ENCODE measurements at regions of chr11 and their contacts with region 1.

Region 1: GRCh38 chr11:114059278-114059983 is at the start of gene ZBTB16:
- DNase-seq: peak; percentile 69
- ATAC-seq: peak; percentile 55
- H3K4me3 Mint-ChIP-seq: peak within 1 kb of the TSS; percentile 92
- H3K27ac Mint-ChIP-seq: peak within 1 kb of the TSS; percentile 82
- H3K4me1 Mint-ChIP-seq: peaks cover 12% of the 10 kb centered on the region
- H3K27me3 Mint-ChIP-seq: peaks cover 61% of the 10 kb centered on the region
- total RNA-seq, gene ZBTB16: 13.1 to 14.6 TPM

Region 2: DNA sequence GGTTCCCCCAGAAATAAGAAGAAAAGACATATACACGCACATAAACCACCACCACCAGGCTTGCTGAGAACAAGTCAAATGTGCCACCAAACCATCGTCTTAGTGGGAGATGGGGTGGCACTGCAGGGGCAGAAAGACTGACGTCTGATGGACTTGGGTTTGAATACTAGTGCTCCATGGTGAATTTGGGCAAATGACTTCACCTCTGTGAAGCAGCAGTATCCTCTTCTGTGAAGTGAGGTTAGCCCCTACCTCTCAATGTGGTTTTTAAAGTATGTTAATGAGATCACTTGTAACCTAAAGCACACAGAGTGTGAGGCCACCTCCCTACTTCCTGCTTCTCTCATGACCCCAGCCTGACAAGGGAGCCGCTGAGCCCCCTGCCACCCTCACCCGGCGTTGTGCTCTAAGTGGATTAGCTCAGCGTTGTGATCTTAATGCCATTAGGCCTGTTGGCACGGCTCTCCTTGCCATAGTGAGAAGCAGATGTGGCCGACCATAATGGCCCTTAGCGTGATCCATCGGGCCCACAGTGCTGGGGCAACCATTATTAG is 14.5 kb after region 1 on chr11:
- POLR2A ChIA-PET with region 1: interaction called, 33 read pairs
- DNase-seq: peak; percentile 59
- ATAC-seq: peak; percentile 81
- H3K4me3 Mint-ChIP-seq: peak overlapping the region; percentile 56
- H3K27ac Mint-ChIP-seq: peak overlapping the region; percentile 91
- H3K4me1 Mint-ChIP-seq: peaks cover 61% of the 10 kb centered on the region
- H3K27me3 Mint-ChIP-seq: peaks cover 3% of the 10 kb centered on the region

Region 3: DNA sequence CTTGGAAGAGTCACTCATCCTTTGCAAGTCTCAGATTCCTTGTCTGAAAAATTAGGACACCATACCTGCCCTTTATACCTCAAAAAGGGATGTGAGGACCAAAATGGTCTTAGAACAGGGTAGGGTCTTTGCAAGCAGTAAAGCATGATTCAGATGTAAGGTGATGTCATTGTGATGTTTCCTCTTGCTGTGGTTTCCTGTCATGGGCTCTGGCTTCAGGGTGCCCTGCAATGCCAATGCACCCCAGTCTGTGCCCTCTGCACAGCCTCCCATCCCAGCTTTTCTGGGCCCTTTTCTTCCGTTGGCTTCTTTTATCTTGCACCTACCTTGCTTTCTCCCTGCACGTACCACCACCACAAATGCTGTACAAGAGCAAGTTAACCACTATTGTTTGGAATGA is 148.9 kb after region 1 on chr11:
- POLR2A ChIA-PET with region 1: no interaction called
- DNase-seq: no peak
- ATAC-seq: peak; percentile 99
- H3K4me3 Mint-ChIP-seq: peak overlapping the region; percentile 25
- H3K27ac Mint-ChIP-seq: peak overlapping the region; percentile 86
- H3K4me1 Mint-ChIP-seq: peaks cover 42% of the 10 kb centered on the region
- H3K27me3 Mint-ChIP-seq: no peaks in the 10 kb centered on the region

Measured in activated naive CD8-positive, alpha-beta T cell treated with anti-CD3 and anti-CD28 coated beads, Interleukin-2, amount 10 ng/mL, durations not matched to agents 7 days and 5 days (primary cell).